Thyroid gland (tissue), 4 donors: ENCODE measurements at regions of chr18 and their contacts with region 1.

Region 1: DNA sequence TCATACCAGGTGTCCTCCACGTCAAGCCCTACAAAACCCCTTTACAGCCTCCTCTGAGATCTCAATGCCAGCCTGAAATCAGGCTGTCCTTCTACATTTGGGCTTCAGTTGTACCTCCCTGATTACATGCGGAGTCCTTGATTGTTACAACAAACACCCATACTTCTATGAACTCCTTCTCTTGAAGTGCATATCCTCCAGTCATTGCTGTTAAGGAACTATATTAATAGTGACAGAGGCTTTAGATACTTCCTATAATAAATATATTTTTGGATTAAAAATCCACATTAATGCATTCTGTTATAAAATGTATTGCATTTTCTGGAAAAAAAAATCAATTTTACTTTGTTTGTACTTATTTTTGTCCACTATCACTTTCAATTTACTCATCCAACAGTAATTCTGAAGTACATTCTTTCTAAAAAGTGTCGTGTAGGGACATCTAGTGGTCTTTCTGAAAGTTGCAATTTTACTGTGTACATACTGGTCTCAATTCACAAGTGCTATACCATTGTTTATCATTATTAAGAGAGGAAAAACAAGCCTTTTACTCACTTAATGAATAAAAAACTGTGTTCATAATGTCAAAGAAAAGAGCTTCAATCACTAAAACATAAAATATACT is 316.4 kb downstream of the DSEL start:
- DNase-seq: no peak
- H3K4me3 ChIP-seq: no peak overlapping the region
- H3K27ac ChIP-seq: no peak overlapping the region
- H3K4me1 ChIP-seq: no peaks in the 10 kb centered on the region
- H3K27me3 ChIP-seq: no peaks in the 10 kb centered on the region
- CTCF ChIP-seq: peak; percentile 18 to 65 (median 56)
- POLR2A ChIP-seq: no peak

Region 2: GRCh38 chr18:67104700-67105284 is 95.3 kb before region 1 on chr18:
- intact Hi-C with region 1: loop called (anchors 10 kb)
- DNase-seq: peak; percentile 49 to 60
- H3K4me3 ChIP-seq: no peak overlapping the region
- H3K27ac ChIP-seq: no peak overlapping the region
- H3K4me1 ChIP-seq: no peaks in the 10 kb centered on the region
- H3K27me3 ChIP-seq: no peaks in the 10 kb centered on the region
- CTCF ChIP-seq: peak in 5 of 6 experiments; percentile 31 to 67 (median 43)
- POLR2A ChIP-seq: no peak